ENCODE measurements at regions of chr21 and their contacts with region 1.

Region 1: DNA sequence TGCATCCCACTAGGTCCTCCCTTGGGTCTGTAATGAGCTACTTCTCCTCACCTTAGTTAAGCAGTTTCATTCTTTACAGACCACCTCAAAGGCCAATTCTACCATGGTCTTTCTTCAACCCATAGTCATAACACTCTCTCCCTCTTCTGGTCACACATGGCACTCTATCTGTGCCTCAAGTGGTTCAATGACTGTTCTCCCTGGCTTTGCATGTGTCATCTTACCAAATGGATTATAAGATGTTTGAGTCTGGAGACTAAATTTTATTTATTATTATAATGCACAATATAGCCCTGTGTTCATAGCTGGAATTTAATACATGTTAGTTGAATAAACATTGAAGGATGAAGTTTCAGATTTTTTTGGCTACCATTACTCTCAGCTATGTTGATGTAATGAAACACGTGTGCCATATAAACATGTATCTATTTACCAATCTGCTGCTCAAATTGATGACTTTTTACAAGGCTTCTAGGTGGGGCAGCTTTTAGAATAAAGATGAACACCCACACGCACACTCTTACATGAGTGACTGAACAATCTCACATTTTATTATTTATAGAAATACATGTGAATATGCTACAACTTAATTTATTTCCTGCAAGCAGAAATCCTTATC is 102.1 kb downstream of the RUNX1 start:
- DNase-seq: no peak
- ATAC-seq: peak; percentile 36
- H3K4me3 Mint-ChIP-seq: no peak overlapping the region
- H3K27ac Mint-ChIP-seq: peak overlapping the region; percentile 51
- H3K4me1 Mint-ChIP-seq: peaks cover 53% of the 10 kb centered on the region
- H3K27me3 Mint-ChIP-seq: no peaks in the 10 kb centered on the region
- CTCF ChIP-seq: no peak

Region 2: GRCh38 chr21:34908419-34909055 is 38.5 kb before region 1 on chr21:
- CTCF ChIA-PET with region 1: no interaction called
- POLR2A ChIA-PET with region 1: interaction called, 8 read pairs
- intact Hi-C with region 1: loop called (anchors 5 kb)
- DNase-seq: no peak
- ATAC-seq: peak; percentile 40
- H3K4me3 Mint-ChIP-seq: peak overlapping the region; percentile 3
- H3K27ac Mint-ChIP-seq: no peak overlapping the region
- H3K4me1 Mint-ChIP-seq: peaks cover 66% of the 10 kb centered on the region
- H3K27me3 Mint-ChIP-seq: no peaks in the 10 kb centered on the region
- CTCF ChIP-seq: no peak

Region 3: DNA sequence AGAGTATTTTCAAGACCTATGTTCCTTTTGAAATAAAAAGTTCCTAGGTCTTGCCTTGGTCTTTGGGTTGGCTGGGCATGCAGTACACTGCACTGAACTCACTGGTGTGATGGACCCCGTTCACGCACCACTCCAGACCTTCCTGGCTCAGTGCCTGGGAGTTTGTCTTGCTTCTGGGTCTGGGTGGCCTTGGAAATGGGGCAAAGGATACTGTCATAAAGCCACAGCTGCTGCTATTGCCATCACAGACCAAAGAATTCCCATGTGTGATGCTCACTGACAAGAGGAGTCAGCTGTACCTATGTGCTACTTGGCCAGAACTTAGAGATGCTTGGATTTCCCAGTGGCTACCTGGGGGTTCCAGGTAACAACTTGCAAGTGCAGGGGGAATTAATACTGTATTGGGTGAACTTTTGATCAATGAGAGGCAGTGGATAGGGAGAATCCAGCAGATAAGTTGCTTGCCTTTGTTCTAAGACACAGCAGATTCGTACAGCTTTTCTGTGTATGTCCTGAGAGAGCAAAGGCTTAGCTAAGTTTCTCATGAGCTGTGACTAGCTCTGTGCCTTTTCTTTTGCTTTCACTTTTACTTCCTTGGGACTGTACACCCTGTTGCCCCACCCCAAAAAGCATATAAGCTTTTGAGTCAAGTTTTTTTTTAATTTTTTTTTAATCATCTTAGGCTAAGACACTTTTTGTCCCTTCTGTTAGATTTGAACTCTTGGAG is 13.3 kb before region 1 on chr21:
- CTCF ChIA-PET with region 1: interaction called, 3 read pairs
- POLR2A ChIA-PET with region 1: interaction called, 5 read pairs
- intact Hi-C with region 1: loop called (anchors 1 kb)
- DNase-seq: no peak
- ATAC-seq: peak; percentile 98
- H3K4me3 Mint-ChIP-seq: peak overlapping the region; percentile 78
- H3K27ac Mint-ChIP-seq: peak overlapping the region; percentile 91
- H3K4me1 Mint-ChIP-seq: peaks cover 73% of the 10 kb centered on the region
- H3K27me3 Mint-ChIP-seq: no peaks in the 10 kb centered on the region
- CTCF ChIP-seq: no peak

Region 4: DNA sequence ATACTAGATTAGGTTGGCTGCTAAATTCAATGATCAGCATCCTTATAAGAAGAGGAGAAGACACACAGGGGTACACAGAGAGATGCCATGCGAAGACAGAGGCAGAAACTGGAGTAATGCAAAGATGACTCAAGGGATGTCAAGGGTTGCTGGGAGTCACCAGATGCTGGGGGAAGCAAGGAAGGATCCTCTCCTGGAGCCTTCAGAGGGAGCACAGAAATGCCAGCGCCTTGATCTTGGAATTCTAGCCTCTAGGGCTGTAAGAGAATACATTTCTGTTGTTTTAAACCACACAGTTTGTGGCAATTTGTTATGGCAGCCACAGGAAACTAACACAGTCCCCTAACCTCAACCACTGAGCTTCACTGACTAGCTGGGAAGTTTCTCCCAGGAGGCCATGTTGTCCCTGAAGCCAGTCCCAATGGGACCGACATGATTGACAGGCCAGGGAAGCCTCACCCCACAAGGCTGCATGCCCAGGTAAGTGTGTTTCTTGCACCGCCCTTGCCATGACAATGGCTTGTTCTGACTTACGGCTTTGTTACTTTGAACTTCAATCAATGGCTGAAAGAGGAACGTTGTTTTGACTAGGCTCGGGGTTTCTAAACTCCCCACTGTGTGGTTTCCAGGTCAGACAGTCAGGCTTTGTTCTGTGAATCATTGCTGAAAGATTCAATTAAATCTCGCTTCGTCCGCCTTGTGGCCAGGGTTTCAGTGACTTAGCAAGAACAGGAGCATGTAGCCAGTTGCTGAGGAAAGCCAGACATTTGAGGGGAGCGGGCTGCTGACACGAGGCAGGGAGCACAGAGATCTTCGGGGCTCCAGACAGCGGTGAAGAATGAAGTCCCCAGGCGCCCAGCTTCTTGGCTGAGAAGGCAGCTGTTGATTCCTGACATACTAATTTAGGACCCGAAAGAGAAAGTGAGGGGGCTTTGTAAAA is 39.8 kb after region 1 on chr21:
- CTCF ChIA-PET with region 1: interaction called, 3 read pairs
- POLR2A ChIA-PET with region 1: interaction called, 10 read pairs
- intact Hi-C with region 1: loop called (anchors 2 kb)
- DNase-seq: peak; percentile 36
- ATAC-seq: peak; percentile 74
- H3K4me3 Mint-ChIP-seq: peak overlapping the region; percentile 69
- H3K27ac Mint-ChIP-seq: peak overlapping the region; percentile 78
- H3K4me1 Mint-ChIP-seq: peaks cover 78% of the 10 kb centered on the region
- H3K27me3 Mint-ChIP-seq: no peaks in the 10 kb centered on the region
- CTCF ChIP-seq: no peak